CD8-positive, alpha-beta memory T cell (primary cell): ENCODE measurements at regions of chr5 and their contacts with region 1.

Region 1: GRCh38 chr5:126686451-126687126 is 85.8 kb downstream of the PHAX start:
- DNase-seq: no peak
- H3K4me3 ChIP-seq: no peak overlapping the region
- H3K4me3 Mint-ChIP-seq: no peak overlapping the region
- H3K27ac ChIP-seq: no peak overlapping the region
- H3K27ac Mint-ChIP-seq: peak overlapping the region in 1 of 8 donors; percentile 4
- H3K4me1 ChIP-seq: no peaks in the 10 kb centered on the region
- H3K4me1 Mint-ChIP-seq: peaks cover 0 to 7% (median 0%) of the 10 kb centered on the region in 3 donors
- H3K27me3 ChIP-seq: no peaks in the 10 kb centered on the region
- H3K27me3 Mint-ChIP-seq: peaks cover 0 to 19% of the 10 kb centered on the region in 2 donors

Region 2: DNA sequence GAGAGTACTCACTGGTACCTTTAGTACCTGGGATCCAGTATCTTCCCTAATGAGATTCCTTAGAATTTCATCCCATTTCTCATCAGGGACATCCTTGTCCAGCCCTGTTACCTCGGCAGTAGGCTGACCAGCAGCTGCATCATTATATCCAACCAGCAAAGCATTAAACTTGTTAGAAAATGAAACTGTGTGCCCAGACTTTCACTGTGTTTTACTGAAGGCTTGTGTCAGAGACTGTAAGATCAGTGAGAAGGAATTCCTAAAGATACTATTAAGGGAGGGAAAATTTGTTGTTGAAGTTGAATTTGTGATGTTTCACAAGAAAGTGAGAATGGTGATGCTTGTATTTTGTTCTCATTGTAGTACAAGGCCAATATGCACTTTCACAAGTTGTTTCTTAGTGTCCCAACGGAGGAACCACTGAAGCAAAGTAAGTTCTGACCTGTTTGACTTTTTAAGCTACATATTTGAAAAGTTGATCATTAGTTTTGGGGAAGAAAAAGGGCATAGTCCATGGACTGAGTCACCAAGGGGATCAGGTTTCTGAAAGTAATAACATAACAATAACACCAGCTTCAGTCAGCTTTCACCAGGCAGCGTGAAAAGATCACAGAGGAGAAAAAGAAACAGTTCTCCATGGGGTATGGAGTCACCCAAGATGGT is 214.6 kb before region 1 on chr5:
- CTCF ChIA-PET with region 1: no interaction called
- POLR2A ChIA-PET with region 1: interaction called, 11 read pairs
- DNase-seq: no peak
- H3K4me3 ChIP-seq: no peak overlapping the region
- H3K4me3 Mint-ChIP-seq: no peak overlapping the region
- H3K27ac ChIP-seq: no peak overlapping the region
- H3K27ac Mint-ChIP-seq: no peak overlapping the region
- H3K4me1 ChIP-seq: no peaks in the 10 kb centered on the region
- H3K4me1 Mint-ChIP-seq: no peaks in the 10 kb centered on the region
- H3K27me3 ChIP-seq: no peaks in the 10 kb centered on the region
- H3K27me3 Mint-ChIP-seq: no peaks in the 10 kb centered on the region